PC-3 (cell line): ENCODE measurements at regions of chr15 and their contacts with region 1.

Region 1: GRCh38 chr15:73601451-73602445 is 31.4 kb downstream of the NPTN start:
- DNase-seq: peak; percentile 58
- ATAC-seq: peak; percentile 89
- H3K4me3 ChIP-seq: no peak overlapping the region
- H3K27ac ChIP-seq: peak overlapping the region; percentile 42
- H3K4me1 ChIP-seq: peaks cover 36% of the 10 kb centered on the region
- H3K27me3 ChIP-seq: no peaks in the 10 kb centered on the region
- CTCF ChIP-seq: no peak

Region 2: GRCh38 chr15:72420576-72420975 is 1181.2 kb before region 1 on chr15:
- CTCF ChIA-PET with region 1: no interaction called
- POLR2A ChIA-PET with region 1: no interaction called
- intact Hi-C with region 1: no loop called
- DNase-seq: no peak
- ATAC-seq: no peak
- H3K4me3 ChIP-seq: no peak overlapping the region
- H3K27ac ChIP-seq: no peak overlapping the region
- H3K4me1 ChIP-seq: no peaks in the 10 kb centered on the region
- H3K27me3 ChIP-seq: no peaks in the 10 kb centered on the region
- CTCF ChIP-seq: no peak

Region 3: GRCh38 chr15:73573572-73573971 is 28.2 kb before region 1 on chr15:
- CTCF ChIA-PET with region 1: no interaction called
- POLR2A ChIA-PET with region 1: no interaction called
- intact Hi-C with region 1: no loop called
- DNase-seq: peak; percentile 41
- ATAC-seq: peak; percentile 73
- H3K4me3 ChIP-seq: no peak overlapping the region
- H3K27ac ChIP-seq: peak overlapping the region; percentile 22
- H3K4me1 ChIP-seq: no peaks in the 10 kb centered on the region
- H3K27me3 ChIP-seq: no peaks in the 10 kb centered on the region
- CTCF ChIP-seq: no peak

Region 4: DNA sequence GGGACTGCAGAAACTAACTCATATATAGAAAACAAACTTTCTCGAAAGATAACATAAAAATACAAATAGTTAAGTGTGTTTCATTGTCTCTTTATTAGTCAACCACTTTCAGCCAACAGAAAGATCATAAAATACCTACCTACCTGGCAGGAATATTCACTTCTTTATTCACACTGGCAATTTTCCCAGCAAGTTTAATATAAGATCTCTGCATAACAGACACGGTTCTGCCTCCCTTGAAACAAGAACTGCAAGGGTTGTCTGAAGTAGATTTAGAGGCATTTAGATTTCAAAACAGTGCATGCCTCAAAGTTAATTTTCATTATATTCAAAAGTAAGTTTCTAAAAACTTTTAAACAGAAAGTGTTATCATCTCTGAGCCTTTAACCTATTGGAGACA is 24.3 kb after region 1 on chr15:
- CTCF ChIA-PET with region 1: no interaction called
- POLR2A ChIA-PET with region 1: interaction called, 4 read pairs
- intact Hi-C with region 1: loop called (anchors 2 kb)
- DNase-seq: peak; percentile 87
- ATAC-seq: peak; percentile 48
- H3K4me3 ChIP-seq: peak overlapping the region; percentile 39; the same call in 1 of the 2 replicates
- H3K27ac ChIP-seq: peak overlapping the region; percentile 65
- H3K4me1 ChIP-seq: peaks cover 84% of the 10 kb centered on the region
- H3K27me3 ChIP-seq: no peaks in the 10 kb centered on the region
- CTCF ChIP-seq: no peak